HCT116 (cell line): ENCODE measurements at regions of chr12 and their contacts with region 1.

Region 1: DNA sequence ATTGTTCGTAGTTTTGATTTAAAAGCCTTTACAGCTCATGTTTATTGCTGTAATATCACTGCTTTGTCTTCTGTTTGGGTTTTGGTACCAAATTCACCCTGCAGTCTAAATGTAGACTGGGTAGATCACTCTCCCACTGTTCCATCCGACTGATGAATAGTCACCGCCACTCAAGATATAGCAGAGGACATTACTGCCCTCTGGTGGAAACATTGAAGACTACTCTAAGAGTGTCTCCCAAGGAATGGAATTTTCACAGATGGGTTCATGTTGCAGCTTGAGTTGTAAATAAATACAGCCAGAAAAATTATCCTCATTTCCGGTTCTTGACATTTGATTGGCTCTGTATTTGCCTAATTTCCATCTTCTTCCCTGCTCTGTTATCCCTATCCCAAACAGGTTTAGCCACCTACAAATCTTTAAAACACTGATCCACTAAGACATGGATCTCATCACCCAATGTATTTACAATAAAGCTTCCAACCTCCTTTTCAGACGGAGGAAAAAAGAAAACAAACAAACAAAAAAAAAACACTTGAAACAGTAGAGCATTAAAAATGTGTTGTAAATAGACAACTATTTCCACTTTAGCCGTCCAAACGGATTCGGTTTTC is 198.3 kb upstream of the CPNE8 start:
- DNase-seq: peak; percentile 70
- ATAC-seq: peak; percentile 98
- H3K4me3 ChIP-seq: no peak overlapping the region
- H3K27ac ChIP-seq: no peak overlapping the region
- H3K4me1 ChIP-seq: no peaks in the 10 kb centered on the region
- H3K27me3 ChIP-seq: no peaks in the 10 kb centered on the region
- CTCF ChIP-seq: peak; percentile 67 to 85 (median 70)
- POLR2A ChIP-seq: no peak
- RAD21 ChIP-seq: peak; percentile 87

Region 2: DNA sequence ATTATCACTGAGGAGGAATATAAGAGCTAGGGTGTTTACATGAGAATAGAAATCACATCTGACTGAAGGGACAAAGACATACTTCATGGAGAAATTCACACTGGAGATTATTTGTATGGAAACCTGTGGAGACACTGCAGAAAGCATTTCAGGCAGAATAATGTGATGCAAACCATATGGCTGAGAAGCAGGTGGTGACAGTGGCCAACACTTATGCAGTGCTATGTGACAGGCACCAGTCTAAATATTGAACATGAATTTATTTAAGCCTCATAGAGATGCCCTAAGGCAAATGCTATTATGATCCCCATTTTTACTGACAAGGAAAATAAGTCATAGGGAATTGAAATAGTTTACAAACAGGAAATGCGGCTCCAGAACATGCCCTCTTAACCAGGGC is 770.8 kb before region 1 on chr12:
- CTCF ChIA-PET with region 1: interaction called, 6 read pairs
- POLR2A ChIA-PET with region 1: no interaction called
- RAD21 ChIA-PET with region 1: no interaction called
- intact Hi-C with region 1: loop called (anchors 1 kb)
- DNase-seq: no peak
- ATAC-seq: no peak
- H3K4me3 ChIP-seq: no peak overlapping the region
- H3K27ac ChIP-seq: no peak overlapping the region
- H3K4me1 ChIP-seq: no peaks in the 10 kb centered on the region
- H3K27me3 ChIP-seq: no peaks in the 10 kb centered on the region
- CTCF ChIP-seq: no peak
- POLR2A ChIP-seq: no peak
- RAD21 ChIP-seq: no peak

Region 3: DNA sequence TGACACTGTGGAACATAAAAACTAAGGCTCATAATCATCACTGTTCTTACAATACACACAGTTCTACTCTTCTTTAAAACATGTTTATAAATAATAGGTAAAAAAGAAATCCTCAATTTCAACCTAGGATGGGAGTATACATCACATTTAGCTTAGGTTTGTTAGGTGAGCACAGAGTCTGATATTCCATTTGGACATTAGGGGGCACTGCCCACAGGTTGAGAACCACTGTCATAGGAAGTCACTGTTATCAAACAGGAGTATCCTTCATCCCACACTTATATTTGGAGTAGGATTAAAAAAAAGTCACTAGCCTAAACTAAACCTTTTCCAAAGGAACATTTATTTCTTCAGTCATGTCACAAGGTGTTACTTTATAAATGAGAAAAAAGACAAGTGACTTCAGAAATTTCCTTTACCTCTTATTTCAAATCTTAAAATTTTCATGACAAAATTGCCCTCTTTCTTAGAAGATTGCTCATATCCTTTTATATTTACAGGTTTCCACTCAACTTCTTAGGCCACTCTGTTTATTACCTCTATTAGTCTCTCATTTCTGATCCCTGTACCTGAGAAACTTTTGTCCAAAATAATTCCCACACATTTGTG is 438.9 kb before region 1 on chr12:
- CTCF ChIA-PET with region 1: no interaction called
- POLR2A ChIA-PET with region 1: no interaction called
- RAD21 ChIA-PET with region 1: no interaction called
- intact Hi-C with region 1: loop called (anchors 5 kb)
- DNase-seq: peak; percentile 15
- ATAC-seq: peak; percentile 88
- H3K4me3 ChIP-seq: no peak overlapping the region
- H3K27ac ChIP-seq: no peak overlapping the region
- H3K4me1 ChIP-seq: no peaks in the 10 kb centered on the region
- H3K27me3 ChIP-seq: no peaks in the 10 kb centered on the region
- CTCF ChIP-seq: peak; percentile 25 to 75 (median 73); a peak in 5 of 6 replicates
- POLR2A ChIP-seq: no peak
- RAD21 ChIP-seq: peak; percentile 56

Region 4: GRCh38 chr12:38921025-38921677 is 182.5 kb before region 1 on chr12:
- CTCF ChIA-PET with region 1: interaction called, 74 read pairs
- POLR2A ChIA-PET with region 1: no interaction called
- RAD21 ChIA-PET with region 1: interaction called, 4 to 9 read pairs
- intact Hi-C with region 1: loop called (anchors 1 kb)
- DNase-seq: peak; percentile 69
- ATAC-seq: peak; percentile 90
- H3K4me3 ChIP-seq: no peak overlapping the region
- H3K27ac ChIP-seq: no peak overlapping the region
- H3K4me1 ChIP-seq: no peaks in the 10 kb centered on the region
- H3K27me3 ChIP-seq: no peaks in the 10 kb centered on the region
- CTCF ChIP-seq: peak; percentile 64 to 80 (median 70); a peak in 5 of 6 replicates
- POLR2A ChIP-seq: no peak
- RAD21 ChIP-seq: peak; percentile 76

Region 5: DNA sequence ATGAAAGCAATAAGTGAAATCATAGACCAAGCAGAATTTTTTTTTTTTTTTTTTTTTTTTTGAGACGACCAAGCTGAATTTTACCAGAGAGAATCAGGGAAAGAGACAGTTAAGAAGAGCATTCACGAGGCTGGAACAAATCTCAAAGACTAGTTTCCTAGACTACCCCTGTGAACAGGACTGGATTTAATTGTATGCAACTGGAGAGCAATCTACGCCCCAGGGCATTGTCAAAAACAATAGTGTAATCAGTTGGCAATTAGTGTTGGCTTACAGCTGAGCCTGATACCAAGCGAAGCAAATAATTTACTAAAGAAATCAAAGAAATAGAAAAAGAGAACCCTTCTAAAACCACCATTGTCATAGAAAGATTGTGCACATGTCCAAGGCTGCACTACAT is 34.6 kb after region 1 on chr12:
- CTCF ChIA-PET with region 1: no interaction called
- POLR2A ChIA-PET with region 1: no interaction called
- RAD21 ChIA-PET with region 1: no interaction called
- intact Hi-C with region 1: no loop called
- DNase-seq: no peak
- ATAC-seq: no peak
- H3K4me3 ChIP-seq: no peak overlapping the region
- H3K27ac ChIP-seq: no peak overlapping the region
- H3K4me1 ChIP-seq: no peaks in the 10 kb centered on the region
- H3K27me3 ChIP-seq: no peaks in the 10 kb centered on the region
- CTCF ChIP-seq: no peak
- POLR2A ChIP-seq: no peak
- RAD21 ChIP-seq: no peak